Common myeloid progenitor, CD34-positive (primary cell): ENCODE measurements at regions of chr20 and their contacts with region 1.

Region 1: DNA sequence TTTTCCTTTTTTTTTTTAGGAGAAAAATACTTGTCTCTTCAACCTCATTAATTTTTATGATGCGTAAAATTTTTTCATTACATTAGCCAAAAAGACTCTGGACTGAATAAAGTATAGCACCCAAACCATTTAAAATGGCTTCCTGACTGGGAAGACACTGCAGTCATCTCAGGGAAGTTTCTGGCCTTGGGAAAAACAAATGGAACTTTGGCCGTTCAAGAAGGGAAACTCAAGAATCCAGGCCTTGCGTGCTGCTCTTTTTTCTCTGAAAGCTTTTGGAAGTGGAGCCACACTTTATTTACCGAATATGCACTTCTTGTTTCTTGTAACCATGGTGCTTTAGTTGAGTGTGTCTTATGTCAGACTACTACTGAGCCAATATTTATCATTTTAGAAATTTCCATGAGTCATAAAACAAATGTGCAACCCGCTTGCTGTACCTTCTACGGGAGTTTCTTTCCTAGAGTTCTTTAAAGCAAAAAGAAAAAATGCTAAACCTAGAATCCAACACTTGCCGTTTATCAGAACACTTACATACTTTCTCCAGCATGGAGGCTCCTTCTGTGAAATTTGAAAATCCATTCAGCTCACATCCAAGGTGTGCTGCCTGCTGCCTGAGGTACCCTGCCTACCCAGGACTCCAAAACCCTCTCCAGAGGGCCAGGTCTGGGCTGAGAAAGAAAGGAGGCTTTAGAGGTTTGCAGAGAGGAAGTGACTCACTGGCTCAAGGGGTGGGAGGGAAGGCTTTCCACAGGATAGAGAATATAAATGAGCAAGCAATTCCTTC is 11.5 kb upstream of the DSTN start:
- DNase-seq: peak; percentile 50 to 84 (median 74)
- H3K4me3 ChIP-seq: peak overlapping the region in 1 of 7 experiments; percentile 42
- H3K27ac ChIP-seq: peak overlapping the region; percentile 56 to 78
- H3K4me1 ChIP-seq: peaks cover 0 to 14% (median 8%) of the 10 kb centered on the region in 4 experiments
- H3K27me3 ChIP-seq: no peaks in the 10 kb centered on the region

Region 2: DNA sequence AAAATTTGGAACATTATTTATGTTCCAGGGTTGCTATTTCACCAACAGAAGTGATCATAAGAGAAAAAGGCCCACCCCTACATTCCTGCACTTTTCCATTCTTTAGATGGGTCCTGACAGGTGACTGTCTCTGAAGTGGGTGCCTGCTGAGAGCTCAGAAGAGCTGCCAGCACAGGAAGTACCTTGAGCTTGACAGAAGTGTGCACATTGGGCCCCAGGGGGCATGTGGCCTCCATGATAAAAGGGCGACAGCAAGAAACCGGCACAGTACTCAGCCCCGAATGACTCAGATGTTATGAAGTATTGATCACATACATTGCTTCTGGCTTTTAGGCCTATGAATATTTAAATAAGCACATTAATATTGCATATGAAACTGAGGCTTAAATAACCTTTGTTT is 181.1 kb before region 1 on chr20:
- CTCF ChIA-PET with region 1: no interaction called
- POLR2A ChIA-PET with region 1: no interaction called
- DNase-seq: no peak
- H3K4me3 ChIP-seq: no peak overlapping the region
- H3K27ac ChIP-seq: no peak overlapping the region
- H3K4me1 ChIP-seq: no peaks in the 10 kb centered on the region
- H3K27me3 ChIP-seq: peaks cover 0 to 2% (median 0%) of the 10 kb centered on the region in 5 experiments

Region 3: DNA sequence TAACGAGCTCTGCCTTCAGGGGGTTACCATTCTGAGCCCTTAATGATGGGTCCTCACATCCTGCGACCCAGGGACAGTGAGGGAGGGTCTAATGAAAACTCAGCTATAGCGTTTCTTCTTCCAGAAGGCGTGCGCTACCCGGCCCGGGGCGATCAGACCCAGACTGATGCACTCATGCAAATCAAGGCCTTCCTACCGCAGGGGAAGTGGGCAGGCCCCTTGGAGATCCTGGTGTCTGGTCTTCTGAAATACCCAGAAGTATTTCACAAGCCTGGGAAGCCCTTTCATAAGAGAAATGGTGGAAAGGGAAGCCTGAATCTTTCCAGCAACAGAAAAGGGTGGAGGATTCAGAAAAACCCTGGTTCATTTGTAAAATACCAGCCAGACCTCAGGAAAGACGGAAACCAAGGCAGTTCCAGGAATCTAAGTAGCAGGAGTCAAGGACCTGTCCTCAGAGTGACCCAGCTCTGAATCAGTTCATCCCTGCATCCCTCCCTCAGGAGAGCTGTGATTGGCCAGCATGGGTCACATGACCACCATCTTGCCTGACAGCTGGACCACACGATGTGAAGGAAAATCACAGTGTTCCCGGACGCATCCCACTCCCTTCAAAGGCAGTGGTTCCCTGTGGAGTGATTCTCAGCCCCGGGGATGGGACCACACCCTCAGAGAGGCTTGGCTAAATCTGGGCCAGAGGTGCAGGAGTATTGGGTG is 39.9 kb before region 1 on chr20:
- CTCF ChIA-PET with region 1: no interaction called
- POLR2A ChIA-PET with region 1: no interaction called
- DNase-seq: no peak
- H3K4me3 ChIP-seq: no peak overlapping the region
- H3K27ac ChIP-seq: no peak overlapping the region
- H3K4me1 ChIP-seq: peaks cover 0 to 3% (median 0%) of the 10 kb centered on the region in 4 experiments
- H3K27me3 ChIP-seq: peaks cover 0 to 2% (median 0%) of the 10 kb centered on the region in 5 experiments

Region 4: GRCh38 chr20:17542993-17543412 is 15.3 kb before region 1 on chr20:
- CTCF ChIA-PET with region 1: interaction called, 10 read pairs
- POLR2A ChIA-PET with region 1: no interaction called
- DNase-seq: no peak
- H3K4me3 ChIP-seq: no peak overlapping the region
- H3K27ac ChIP-seq: no peak overlapping the region
- H3K4me1 ChIP-seq: peaks cover 0 to 7% (median 1%) of the 10 kb centered on the region in 4 experiments
- H3K27me3 ChIP-seq: no peaks in the 10 kb centered on the region